ENCODE measurements at regions of chr10 and their contacts with region 1.

Region 1: GRCh38 chr10:124741281-124741921 is 2.8 kb downstream of the FAM53B start:
- DNase-seq: peak; percentile 82
- H3K4me3 Mint-ChIP-seq: peak overlapping the region; percentile 95
- H3K27ac Mint-ChIP-seq: peak overlapping the region; percentile 77
- H3K4me1 Mint-ChIP-seq: peaks cover 71% of the 10 kb centered on the region
- H3K27me3 Mint-ChIP-seq: peaks cover 2% of the 10 kb centered on the region

Region 2: GRCh38 chr10:124612611-124613498 is 128.5 kb before region 1 on chr10:
- CTCF ChIA-PET with region 1: interaction called, 11 read pairs
- POLR2A ChIA-PET with region 1: interaction called, 6 read pairs
- DNase-seq: peak; percentile 25
- H3K4me3 Mint-ChIP-seq: no peak overlapping the region
- H3K27ac Mint-ChIP-seq: peak overlapping the region; percentile 38
- H3K4me1 Mint-ChIP-seq: peaks cover 49% of the 10 kb centered on the region
- H3K27me3 Mint-ChIP-seq: peaks cover 2% of the 10 kb centered on the region

Region 3: DNA sequence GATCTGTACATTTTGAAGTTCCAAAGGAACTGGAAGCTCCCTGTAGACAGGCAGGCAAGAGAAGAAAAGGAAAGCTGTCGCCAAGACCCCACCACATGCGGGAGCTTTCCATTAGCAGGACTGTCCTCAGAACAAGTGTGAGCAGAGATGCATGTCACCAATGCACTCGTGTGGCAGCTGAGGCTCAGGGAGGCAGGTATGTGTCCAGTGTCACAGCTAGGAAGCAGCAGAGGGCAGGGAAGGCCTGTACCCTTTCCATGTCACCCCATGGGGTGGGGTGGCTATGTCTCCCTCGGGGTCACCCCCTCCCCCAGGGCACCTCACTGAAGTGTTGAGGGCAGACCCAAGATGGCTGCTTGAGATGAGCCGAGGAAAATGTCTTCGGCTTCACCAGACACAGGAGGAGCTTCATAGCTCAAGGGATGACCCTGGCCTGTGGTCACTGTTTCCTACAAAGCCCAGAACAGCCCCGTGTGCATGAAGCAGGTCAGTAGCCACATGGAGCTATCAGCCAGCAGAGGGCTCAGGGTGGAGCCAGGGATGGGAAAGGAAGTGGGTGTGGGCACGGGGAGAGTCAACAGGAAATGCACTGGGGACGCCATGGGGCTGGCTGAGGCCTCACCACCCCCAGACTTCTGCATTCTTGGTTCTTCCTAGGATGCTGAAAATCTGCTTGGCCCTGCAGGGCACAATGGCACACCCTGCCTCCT is 93.8 kb before region 1 on chr10:
- CTCF ChIA-PET with region 1: interaction called, 74 read pairs
- POLR2A ChIA-PET with region 1: interaction called, 39 read pairs
- DNase-seq: peak; percentile 88
- H3K4me3 Mint-ChIP-seq: peak overlapping the region; percentile 69
- H3K27ac Mint-ChIP-seq: peak overlapping the region; percentile 95
- H3K4me1 Mint-ChIP-seq: peaks cover 90% of the 10 kb centered on the region
- H3K27me3 Mint-ChIP-seq: no peaks in the 10 kb centered on the region

Region 4: DNA sequence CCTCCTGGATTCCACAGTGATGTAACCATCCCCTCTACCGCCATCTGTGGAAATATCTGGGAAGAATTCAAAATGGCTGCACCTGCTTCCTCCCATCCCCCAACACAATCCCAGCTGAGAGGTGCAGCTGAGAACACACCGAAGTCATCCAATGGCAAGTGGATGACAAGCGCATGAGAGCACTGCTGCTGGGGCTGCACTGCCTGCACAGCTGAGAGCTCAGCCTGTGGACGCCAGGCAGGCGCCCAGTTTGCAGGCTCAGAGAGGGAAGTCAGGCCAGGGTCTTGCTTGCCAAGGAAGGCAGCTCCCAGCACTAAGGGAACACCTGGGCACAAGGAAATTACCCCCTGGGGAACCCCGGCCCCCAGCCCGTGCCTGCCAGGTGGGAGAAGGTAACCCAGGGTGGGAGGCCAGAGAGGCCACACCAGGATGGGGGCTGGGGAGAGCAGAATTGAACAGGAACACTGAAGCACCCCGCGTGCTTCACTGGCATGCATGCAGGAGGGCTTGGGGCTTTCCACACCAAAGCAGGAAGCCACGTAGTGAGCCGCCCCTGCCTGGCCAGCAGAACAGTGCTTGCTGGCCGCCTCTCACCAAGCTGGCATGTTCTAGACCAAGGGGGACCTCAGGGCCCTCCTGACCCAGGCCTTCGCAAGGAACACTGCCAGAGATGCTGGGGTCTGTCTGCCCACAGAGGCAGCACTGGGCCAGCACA is 43.4 kb before region 1 on chr10:
- CTCF ChIA-PET with region 1: interaction called, 16 read pairs
- POLR2A ChIA-PET with region 1: interaction called, 23 read pairs
- DNase-seq: peak; percentile 57
- H3K4me3 Mint-ChIP-seq: no peak overlapping the region
- H3K27ac Mint-ChIP-seq: peak overlapping the region; percentile 96
- H3K4me1 Mint-ChIP-seq: peaks cover 98% of the 10 kb centered on the region
- H3K27me3 Mint-ChIP-seq: no peaks in the 10 kb centered on the region

Region 5: DNA sequence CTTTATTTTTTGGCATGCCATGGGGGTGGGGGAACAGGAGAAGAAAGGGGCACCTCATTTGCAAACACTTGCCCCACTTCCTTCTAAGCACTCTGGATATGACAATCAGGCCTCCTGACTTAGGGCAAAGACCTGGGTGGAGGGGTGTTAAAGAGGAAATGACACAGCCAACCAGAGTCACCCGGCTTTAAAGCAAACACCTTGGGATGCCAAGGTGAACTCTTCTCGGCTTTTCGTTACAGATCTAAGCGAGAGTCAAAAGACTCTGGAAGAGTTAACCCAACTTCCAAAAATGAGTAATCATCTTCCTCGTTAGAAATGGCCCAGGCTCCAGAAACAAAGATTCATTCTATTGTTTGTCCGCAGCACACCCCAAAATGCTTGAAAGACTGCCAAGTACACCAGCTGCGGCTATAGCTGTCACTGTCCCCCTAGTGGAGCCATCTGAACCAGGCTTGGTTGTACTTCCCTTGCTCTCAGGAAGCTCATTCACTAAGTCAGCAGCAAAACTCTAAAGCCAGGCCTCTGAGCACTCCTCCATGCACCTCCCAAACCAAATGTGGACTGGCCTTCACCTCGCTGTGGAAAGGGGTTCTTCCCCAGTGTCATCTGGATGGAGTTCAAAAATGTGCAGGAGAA is 22.1 kb before region 1 on chr10:
- CTCF ChIA-PET with region 1: interaction called, 164 read pairs
- POLR2A ChIA-PET with region 1: interaction called, 238 read pairs
- DNase-seq: peak; percentile 79
- H3K4me3 Mint-ChIP-seq: peak overlapping the region; percentile 72
- H3K27ac Mint-ChIP-seq: peak overlapping the region; percentile 92
- H3K4me1 Mint-ChIP-seq: peaks cover 94% of the 10 kb centered on the region
- H3K27me3 Mint-ChIP-seq: no peaks in the 10 kb centered on the region